Activated naive CD4-positive, alpha-beta T cell treated with anti-CD3 and anti-CD28 coated beads, Interleukin-2, amount 10 ng/mL, durations not matched to agents 7 days and 5 days (primary cell): ENCODE measurements at regions of chr1 and their contacts with region 1.

Region 1: GRCh38 chr1:182962554-182963115 is 9.7 kb upstream of the SHCBP1L start:
- DNase-seq: peak; percentile 42
- H3K4me3 Mint-ChIP-seq: no peak overlapping the region
- H3K27ac Mint-ChIP-seq: no peak overlapping the region
- H3K4me1 Mint-ChIP-seq: no peaks in the 10 kb centered on the region
- H3K27me3 Mint-ChIP-seq: peaks cover 31% of the 10 kb centered on the region

Region 2: DNA sequence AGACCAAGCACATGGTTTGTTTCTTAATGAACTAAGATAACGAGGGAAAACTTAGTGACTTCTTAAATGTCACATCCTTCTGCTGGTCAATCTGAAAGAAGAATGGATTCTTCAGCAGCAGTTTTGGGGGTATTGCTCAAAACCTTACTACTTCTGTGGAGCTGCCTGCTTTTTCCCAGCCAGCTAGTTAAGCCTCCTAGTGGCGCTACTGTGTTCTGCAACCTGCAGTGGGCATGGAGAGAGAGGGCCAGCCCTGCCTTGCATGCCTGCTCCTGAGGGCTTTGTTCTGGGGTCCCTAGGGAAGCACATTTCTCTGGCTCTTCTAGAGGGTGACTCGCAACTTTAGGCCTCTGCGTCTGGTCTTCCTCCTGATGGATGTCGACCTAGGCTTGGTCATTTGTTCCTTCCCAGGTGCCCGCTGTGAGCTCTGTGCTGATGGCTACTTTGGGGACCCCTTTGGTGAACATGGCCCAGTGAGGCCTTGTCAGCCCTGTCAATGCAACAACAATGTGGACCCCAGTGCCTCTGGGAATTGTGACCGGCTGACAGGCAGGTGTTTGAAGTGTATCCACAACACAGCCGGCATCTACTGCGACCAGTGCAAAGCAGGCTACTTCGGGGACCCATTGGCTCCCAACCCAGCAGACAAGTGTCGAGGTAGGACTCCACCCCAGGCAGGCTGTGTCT is 265.5 kb after region 1 on chr1:
- CTCF ChIA-PET with region 1: interaction called, 21 read pairs
- DNase-seq: peak; percentile 60
- H3K4me3 Mint-ChIP-seq: no peak overlapping the region
- H3K27ac Mint-ChIP-seq: no peak overlapping the region
- H3K4me1 Mint-ChIP-seq: peaks cover 6% of the 10 kb centered on the region
- H3K27me3 Mint-ChIP-seq: peaks cover 12% of the 10 kb centered on the region